ENCODE measurements at regions of chr10 and their contacts with region 1.

Region 1: DNA sequence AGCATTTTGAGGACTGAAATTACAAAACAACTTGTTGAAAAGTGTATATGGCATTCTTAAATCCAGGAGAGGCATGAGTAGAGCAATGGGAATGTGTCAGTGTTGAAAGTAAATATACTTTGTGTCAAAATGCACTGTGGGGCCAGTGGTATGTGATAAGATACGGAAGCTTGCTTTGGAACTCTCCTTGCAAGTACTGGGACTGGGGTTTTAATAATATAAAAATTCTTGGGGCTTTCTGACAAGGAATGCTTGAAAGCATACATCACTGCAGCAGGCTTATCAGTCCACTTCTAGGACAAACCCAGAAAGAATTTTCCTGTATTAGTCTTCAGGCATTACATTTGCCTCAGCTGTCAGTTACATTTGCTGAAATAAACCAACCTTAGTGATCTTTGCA is 472.8 kb upstream of the FZD8 start:
- DNase-seq: no peak
- H3K4me3 ChIP-seq: no peak overlapping the region
- H3K27ac ChIP-seq: no peak overlapping the region
- H3K4me1 ChIP-seq: peaks cover 0 to 62% (median 50%) of the 10 kb centered on the region in 4 donors
- H3K27me3 ChIP-seq: no peaks in the 10 kb centered on the region
- CTCF ChIP-seq: no peak
- EP300 ChIP-seq: no peak
- POLR2A ChIP-seq: no peak

Region 2: DNA sequence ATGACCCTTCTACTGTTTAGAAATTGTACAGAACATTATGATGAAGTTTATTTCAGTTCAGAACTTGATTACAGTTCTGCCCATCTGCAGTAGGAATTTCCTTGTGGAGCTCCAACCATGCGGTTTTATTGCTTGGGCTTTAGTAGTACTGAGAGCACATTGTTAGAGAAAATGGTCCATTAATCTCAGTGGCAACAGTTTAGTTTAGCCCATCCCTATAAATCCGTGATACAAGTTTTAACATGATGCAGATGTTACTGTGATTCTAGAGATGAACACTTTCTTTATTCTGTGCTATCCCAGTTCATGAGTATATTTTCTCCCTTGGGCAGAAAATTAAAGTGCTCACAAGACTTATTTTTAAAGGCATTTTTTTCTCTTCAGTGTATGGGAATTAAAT is 388.1 kb before region 1 on chr10:
- intact Hi-C with region 1: loop called (anchors 5 kb)
- DNase-seq: no peak
- H3K4me3 ChIP-seq: no peak overlapping the region
- H3K27ac ChIP-seq: peak overlapping the region in 3 of 4 donors; percentile 65 to 75 (median 72)
- H3K4me1 ChIP-seq: peaks cover 0 to 27% (median 24%) of the 10 kb centered on the region in 4 donors
- H3K27me3 ChIP-seq: no peaks in the 10 kb centered on the region
- CTCF ChIP-seq: no peak
- EP300 ChIP-seq: peak in 3 of 4 donors; percentile 26 to 78 (median 38)
- POLR2A ChIP-seq: no peak

Region 3: GRCh38 chr10:36148207-36148606 is 33.3 kb after region 1 on chr10:
- intact Hi-C with region 1: no loop called
- DNase-seq: no peak
- H3K4me3 ChIP-seq: no peak overlapping the region
- H3K27ac ChIP-seq: no peak overlapping the region
- H3K4me1 ChIP-seq: no peaks in the 10 kb centered on the region
- H3K27me3 ChIP-seq: no peaks in the 10 kb centered on the region
- CTCF ChIP-seq: no peak
- EP300 ChIP-seq: no peak
- POLR2A ChIP-seq: no peak